Activated T-helper 2 cell treated with anti-CD3 and anti-CD28 coated beads, Interferon-gamma antibody, Interleukin-2, Interleukin-4, amounts not matched to agents 10 μg/mL and 5 μg/mL and 100 μg/mL, durations not matched to agents 14 hours and 24 hours and 36 hours (primary cell): ENCODE measurements at regions of chr2 and their contacts with region 1.

Region 1: DNA sequence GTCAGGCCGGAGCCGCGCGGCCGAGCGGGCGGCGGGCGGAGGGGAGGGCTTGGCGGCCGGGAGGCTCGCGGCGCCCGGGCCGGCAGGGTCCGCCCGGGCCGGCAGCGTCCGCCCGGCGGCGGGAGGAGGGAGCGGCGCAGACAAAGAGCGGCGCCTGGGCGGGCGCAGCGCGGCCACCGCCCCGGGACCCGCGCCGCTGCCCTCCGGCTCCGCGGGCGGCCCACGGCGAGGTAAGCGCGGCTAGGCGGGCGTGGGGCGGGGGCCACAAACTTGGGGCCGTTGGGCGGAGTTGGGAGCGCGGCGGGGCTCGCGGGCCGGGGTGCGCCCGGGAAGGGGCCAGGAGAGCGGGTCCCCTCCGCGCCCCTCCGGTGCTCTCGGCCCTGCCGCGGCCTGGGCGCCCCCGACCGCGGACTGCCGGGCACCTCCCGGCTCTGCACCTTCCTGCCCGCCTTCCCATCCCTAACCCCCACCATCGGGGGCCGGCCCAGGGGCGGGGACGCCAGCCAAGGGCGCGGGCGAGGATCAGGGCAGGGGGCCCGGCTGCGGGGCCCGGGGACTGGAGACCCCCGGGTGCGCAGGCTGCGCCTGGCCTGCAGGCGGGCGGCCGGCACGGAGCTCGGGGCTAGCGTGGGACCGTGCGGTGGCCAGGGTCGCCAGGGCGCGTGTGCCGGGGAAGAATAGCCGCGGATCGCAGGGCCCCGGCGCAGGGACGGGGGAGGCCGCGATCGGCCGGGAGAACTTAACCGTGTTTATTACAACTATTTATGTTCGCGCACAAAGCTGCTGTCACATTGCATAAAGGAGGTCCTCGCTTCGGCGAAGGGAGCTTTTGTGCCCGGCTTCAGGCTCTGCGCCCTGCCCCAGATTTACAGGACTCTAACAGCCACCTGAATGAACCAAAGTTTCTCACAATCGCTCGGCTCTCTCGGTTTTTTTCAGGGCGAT is at the start of gene NCK2:
- DNase-seq: no peak
- H3K4me3 Mint-ChIP-seq: peak within 1 kb of the TSS; percentile 89
- H3K27ac Mint-ChIP-seq: peak within 1 kb of the TSS; percentile 95
- H3K4me1 Mint-ChIP-seq: peaks cover 67% of the 10 kb centered on the region
- H3K27me3 Mint-ChIP-seq: no peaks in the 10 kb centered on the region
- total RNA-seq, gene NCK2: 72.4 and 73.9 TPM in 2 replicates

Region 2: GRCh38 chr2:105645031-105645937 is 99.9 kb before region 1 on chr2:
- intact Hi-C with region 1: loop called (anchors 1 kb)
- DNase-seq: no peak
- H3K4me3 Mint-ChIP-seq: no peak overlapping the region
- H3K27ac Mint-ChIP-seq: no peak overlapping the region
- H3K4me1 Mint-ChIP-seq: no peaks in the 10 kb centered on the region
- H3K27me3 Mint-ChIP-seq: peaks cover 14% of the 10 kb centered on the region

Region 3: GRCh38 chr2:105797298-105797819 is 52.2 kb after region 1 on chr2:
- intact Hi-C with region 1: loop called (anchors 1 kb)
- DNase-seq: peak; percentile 48
- H3K4me3 Mint-ChIP-seq: peak overlapping the region; percentile 53
- H3K27ac Mint-ChIP-seq: peak overlapping the region; percentile 91
- H3K4me1 Mint-ChIP-seq: peaks cover 87% of the 10 kb centered on the region
- H3K27me3 Mint-ChIP-seq: no peaks in the 10 kb centered on the region

Region 4: DNA sequence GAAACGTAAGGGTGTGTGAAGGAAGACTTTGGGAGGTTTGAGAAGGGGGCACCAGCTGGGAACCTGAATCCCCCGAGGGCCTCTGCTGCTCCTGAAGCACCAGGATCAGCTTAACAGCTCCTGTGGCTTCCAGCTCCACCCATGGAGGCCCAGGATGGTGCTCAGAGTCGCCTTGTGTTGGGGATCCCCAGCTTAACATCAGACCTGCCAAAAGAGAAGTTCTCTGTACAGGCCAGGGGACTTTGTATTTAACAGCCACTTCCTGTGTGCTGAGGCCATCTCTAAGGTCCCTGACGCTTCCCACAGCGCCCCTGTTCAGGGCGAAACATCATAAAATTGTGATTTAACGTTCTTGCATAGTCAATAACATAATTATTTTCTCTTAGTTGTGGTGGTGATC is 77.0 kb after region 1 on chr2:
- intact Hi-C with region 1: no loop called
- DNase-seq: no peak
- H3K4me3 Mint-ChIP-seq: no peak overlapping the region
- H3K27ac Mint-ChIP-seq: peak overlapping the region; percentile 58
- H3K4me1 Mint-ChIP-seq: peaks cover 47% of the 10 kb centered on the region
- H3K27me3 Mint-ChIP-seq: no peaks in the 10 kb centered on the region

Region 5: GRCh38 chr2:105858868-105859693 is 113.9 kb after region 1 on chr2:
- intact Hi-C with region 1: loop called (anchors 2 kb)
- DNase-seq: no peak
- H3K4me3 Mint-ChIP-seq: peak overlapping the region; percentile 46
- H3K27ac Mint-ChIP-seq: peak overlapping the region; percentile 86
- H3K4me1 Mint-ChIP-seq: peaks cover 79% of the 10 kb centered on the region
- H3K27me3 Mint-ChIP-seq: no peaks in the 10 kb centered on the region

Region 6: GRCh38 chr2:106098081-106098480 is 352.9 kb after region 1 on chr2:
- intact Hi-C with region 1: loop called (anchors 2 kb)
- DNase-seq: no peak
- H3K4me3 Mint-ChIP-seq: no peak overlapping the region
- H3K27ac Mint-ChIP-seq: no peak overlapping the region
- H3K4me1 Mint-ChIP-seq: peaks cover 33% of the 10 kb centered on the region
- H3K27me3 Mint-ChIP-seq: no peaks in the 10 kb centered on the region